ENCODE measurements at regions of chr1 and their contacts with region 1.

Region 1: GRCh38 chr1:219173758-219174588 is at the start of gene LYPLAL1:
- DNase-seq: peak; percentile 78
- ATAC-seq: peak; percentile 72
- H3K4me3 ChIP-seq: peak within 1 kb of the TSS; percentile 93
- H3K27ac ChIP-seq: peak within 1 kb of the TSS; percentile 93
- H3K4me1 ChIP-seq: peaks cover 9% of the 10 kb centered on the region
- H3K27me3 ChIP-seq: no peaks in the 10 kb centered on the region
- CTCF ChIP-seq: peak; percentile 17 to 21 (median 21); a peak in 3 of 6 replicates
- EP300 ChIP-seq: peak in 1 of 2 experiments; percentile 8; a peak in 1 of 4 replicates
- POLR2A ChIP-seq: peak; percentile 99
- RAD21 ChIP-seq: no peak
- polyA plus RNA-seq, gene LYPLAL1: 97.0 to 112 TPM

Region 2: GRCh38 chr1:219088778-219089557 is 85.0 kb before region 1 on chr1:
- CTCF ChIA-PET with region 1: interaction called, 8 read pairs
- POLR2A ChIA-PET with region 1: interaction called, 8 read pairs
- RAD21 ChIA-PET with region 1: interaction called, 7 read pairs
- SMC1A ChIA-PET with region 1: interaction called, 13 read pairs
- in situ Hi-C with region 1: no loop called
- intact Hi-C with region 1: loop called (anchors 2 kb)
- DNase-seq: peak; percentile 61
- ATAC-seq: peak; percentile 93
- H3K4me3 ChIP-seq: no peak overlapping the region
- H3K27ac ChIP-seq: no peak overlapping the region
- H3K4me1 ChIP-seq: peaks cover 21% of the 10 kb centered on the region
- H3K27me3 ChIP-seq: no peaks in the 10 kb centered on the region
- CTCF ChIP-seq: no peak
- EP300 ChIP-seq: no peak
- POLR2A ChIP-seq: no peak
- RAD21 ChIP-seq: no peak

Region 3: GRCh38 chr1:220235462-220235861 is 1061.5 kb after region 1 on chr1:
- CTCF ChIA-PET with region 1: no interaction called
- POLR2A ChIA-PET with region 1: no interaction called
- RAD21 ChIA-PET with region 1: no interaction called
- SMC1A ChIA-PET with region 1: no interaction called
- in situ Hi-C with region 1: loop called (anchors 25 kb)
- intact Hi-C with region 1: no loop called
- DNase-seq: no peak
- ATAC-seq: no peak
- H3K4me3 ChIP-seq: no peak overlapping the region
- H3K27ac ChIP-seq: no peak overlapping the region
- H3K4me1 ChIP-seq: no peaks in the 10 kb centered on the region
- H3K27me3 ChIP-seq: no peaks in the 10 kb centered on the region
- CTCF ChIP-seq: no peak
- EP300 ChIP-seq: no peak
- POLR2A ChIP-seq: no peak
- RAD21 ChIP-seq: no peak

Measured in GM12878 (cell line).